CD8-positive, alpha-beta T cell (primary cell): ENCODE measurements at regions of chr7 and their contacts with region 1.

Region 1: GRCh38 chr7:144786522-144786921 is 49.3 kb downstream of the TPK1 start:
- DNase-seq: peak in 2 of 9 experiments; percentile 31 to 50
- ATAC-seq: no peak
- H3K4me3 ChIP-seq: no peak overlapping the region
- H3K4me3 Mint-ChIP-seq: no peak overlapping the region
- H3K27ac ChIP-seq: no peak overlapping the region
- H3K27ac Mint-ChIP-seq: no peak overlapping the region
- H3K4me1 ChIP-seq: no peaks in the 10 kb centered on the region
- H3K4me1 Mint-ChIP-seq: peaks cover 7% of the 10 kb centered on the region
- H3K27me3 ChIP-seq: no peaks in the 10 kb centered on the region
- H3K27me3 Mint-ChIP-seq: no peaks in the 10 kb centered on the region
- CTCF ChIP-seq: no peak

Region 2: DNA sequence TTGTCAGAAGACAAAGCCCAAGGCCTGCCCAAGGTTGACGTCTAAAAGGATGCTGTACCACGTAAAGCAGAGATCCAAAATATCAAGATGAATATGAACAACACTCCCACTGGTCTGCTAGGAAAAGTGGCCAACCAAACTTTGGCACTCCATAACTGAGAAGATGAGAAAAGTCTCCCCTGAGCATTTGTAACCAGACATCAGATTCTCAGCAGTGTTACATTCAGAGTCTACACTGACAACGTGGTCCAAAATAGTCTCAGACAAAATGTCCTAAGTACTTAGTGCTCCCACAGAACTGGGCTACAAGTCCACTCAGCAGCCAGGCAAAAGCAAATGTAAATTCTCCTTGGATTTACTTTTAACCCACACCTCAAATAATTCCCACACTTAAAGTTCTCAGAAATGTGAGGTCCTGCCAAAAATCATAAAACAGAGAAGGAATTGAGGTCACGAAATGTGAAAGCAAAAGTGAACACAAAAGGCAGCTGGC is 197.9 kb before region 1 on chr7:
- CTCF ChIA-PET with region 1: no interaction called
- POLR2A ChIA-PET with region 1: no interaction called
- intact Hi-C with region 1: no loop called
- DNase-seq: no peak
- ATAC-seq: no peak
- H3K4me3 ChIP-seq: no peak overlapping the region
- H3K4me3 Mint-ChIP-seq: no peak overlapping the region
- H3K27ac ChIP-seq: no peak overlapping the region
- H3K27ac Mint-ChIP-seq: no peak overlapping the region
- H3K4me1 ChIP-seq: no peaks in the 10 kb centered on the region
- H3K4me1 Mint-ChIP-seq: no peaks in the 10 kb centered on the region
- H3K27me3 ChIP-seq: no peaks in the 10 kb centered on the region
- H3K27me3 Mint-ChIP-seq: no peaks in the 10 kb centered on the region
- CTCF ChIP-seq: no peak

Region 3: GRCh38 chr7:144747936-144748335 is 38.6 kb before region 1 on chr7:
- CTCF ChIA-PET with region 1: no interaction called
- POLR2A ChIA-PET with region 1: no interaction called
- intact Hi-C with region 1: no loop called
- DNase-seq: no peak
- ATAC-seq: no peak
- H3K4me3 ChIP-seq: no peak overlapping the region
- H3K4me3 Mint-ChIP-seq: no peak overlapping the region
- H3K27ac ChIP-seq: no peak overlapping the region
- H3K27ac Mint-ChIP-seq: no peak overlapping the region
- H3K4me1 ChIP-seq: no peaks in the 10 kb centered on the region
- H3K4me1 Mint-ChIP-seq: no peaks in the 10 kb centered on the region
- H3K27me3 ChIP-seq: no peaks in the 10 kb centered on the region
- H3K27me3 Mint-ChIP-seq: no peaks in the 10 kb centered on the region
- CTCF ChIP-seq: no peak

Region 4: GRCh38 chr7:144796919-144797318 is 10.4 kb after region 1 on chr7:
- CTCF ChIA-PET with region 1: interaction called, 3 read pairs
- POLR2A ChIA-PET with region 1: interaction called, 3 read pairs
- intact Hi-C with region 1: loop called in 1 of 2 experiments (anchors 2 kb)
- DNase-seq: no peak
- ATAC-seq: no peak
- H3K4me3 ChIP-seq: no peak overlapping the region
- H3K4me3 Mint-ChIP-seq: no peak overlapping the region
- H3K27ac ChIP-seq: no peak overlapping the region
- H3K27ac Mint-ChIP-seq: no peak overlapping the region
- H3K4me1 ChIP-seq: no peaks in the 10 kb centered on the region
- H3K4me1 Mint-ChIP-seq: peaks cover 35% of the 10 kb centered on the region
- H3K27me3 ChIP-seq: no peaks in the 10 kb centered on the region
- H3K27me3 Mint-ChIP-seq: no peaks in the 10 kb centered on the region
- CTCF ChIP-seq: no peak

Region 5: DNA sequence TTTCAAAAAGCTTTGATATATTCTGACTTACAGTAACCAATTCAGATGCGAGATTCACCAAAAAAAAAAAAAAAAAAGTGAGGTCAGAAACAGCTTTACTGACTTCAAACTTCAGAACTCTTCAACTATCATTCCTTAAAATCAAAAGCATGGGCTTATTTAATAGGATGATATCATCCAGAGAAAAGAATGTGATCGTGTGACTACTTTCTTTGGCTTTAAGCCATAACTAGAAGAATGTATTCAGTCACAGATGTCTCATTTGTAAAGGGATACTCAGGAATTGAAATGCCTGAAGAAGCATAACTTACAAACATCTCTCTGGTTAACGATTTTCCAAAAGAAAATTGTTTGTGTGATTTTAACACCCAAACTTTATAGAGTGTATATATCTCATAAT is 37.8 kb after region 1 on chr7:
- CTCF ChIA-PET with region 1: no interaction called
- POLR2A ChIA-PET with region 1: no interaction called
- intact Hi-C with region 1: no loop called
- DNase-seq: no peak
- ATAC-seq: no peak
- H3K4me3 ChIP-seq: no peak overlapping the region
- H3K4me3 Mint-ChIP-seq: no peak overlapping the region
- H3K27ac ChIP-seq: no peak overlapping the region
- H3K27ac Mint-ChIP-seq: no peak overlapping the region
- H3K4me1 ChIP-seq: peaks cover 34% of the 10 kb centered on the region
- H3K4me1 Mint-ChIP-seq: peaks cover 68% of the 10 kb centered on the region
- H3K27me3 ChIP-seq: no peaks in the 10 kb centered on the region
- H3K27me3 Mint-ChIP-seq: no peaks in the 10 kb centered on the region
- CTCF ChIP-seq: no peak

Region 6: DNA sequence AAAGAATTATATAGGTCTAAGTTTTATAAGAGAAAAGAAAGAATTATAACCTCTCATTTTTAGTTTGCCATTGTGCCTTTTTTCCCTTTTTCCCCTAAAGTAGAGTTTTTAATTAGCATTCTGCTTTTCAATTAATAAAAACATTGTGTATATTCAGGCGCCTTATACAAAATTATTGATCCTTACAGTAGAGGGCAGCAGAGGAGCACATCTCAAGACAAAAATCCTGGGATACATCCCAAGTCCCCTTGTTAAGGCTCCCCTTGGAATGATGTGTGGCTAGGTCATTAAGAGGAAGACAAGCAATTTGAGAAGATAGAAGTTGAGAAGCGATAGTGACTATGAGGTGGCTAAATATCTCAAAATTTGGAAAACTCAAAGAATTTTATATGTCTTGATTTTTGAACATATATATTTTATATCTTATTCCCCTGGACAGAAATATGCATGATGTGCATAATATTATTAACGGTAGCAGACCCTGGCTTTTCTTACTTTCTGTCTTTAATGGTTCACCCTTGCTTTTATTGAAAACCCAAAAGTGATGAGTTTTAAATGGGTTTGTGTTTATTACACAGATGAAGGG is 68.4 kb after region 1 on chr7:
- CTCF ChIA-PET with region 1: interaction called, 3 read pairs
- POLR2A ChIA-PET with region 1: no interaction called
- intact Hi-C with region 1: loop called in 1 of 2 experiments (anchors 5 kb)
- DNase-seq: peak in 1 of 9 experiments; percentile 32
- ATAC-seq: no peak
- H3K4me3 ChIP-seq: no peak overlapping the region
- H3K4me3 Mint-ChIP-seq: no peak overlapping the region
- H3K27ac ChIP-seq: no peak overlapping the region
- H3K27ac Mint-ChIP-seq: no peak overlapping the region
- H3K4me1 ChIP-seq: no peaks in the 10 kb centered on the region
- H3K4me1 Mint-ChIP-seq: no peaks in the 10 kb centered on the region
- H3K27me3 ChIP-seq: no peaks in the 10 kb centered on the region
- H3K27me3 Mint-ChIP-seq: no peaks in the 10 kb centered on the region
- CTCF ChIP-seq: no peak